HCT116 (cell line): ENCODE measurements at regions of chr3 and their contacts with region 1.

Region 1: GRCh38 chr3:127831723-127832172 is 9.4 kb upstream of the MGLL start:
- DNase-seq: no peak
- ATAC-seq: peak; percentile 79
- H3K4me3 ChIP-seq: no peak overlapping the region
- H3K27ac ChIP-seq: no peak overlapping the region
- H3K4me1 ChIP-seq: no peaks in the 10 kb centered on the region
- H3K27me3 ChIP-seq: no peaks in the 10 kb centered on the region
- CTCF ChIP-seq: peak; percentile 81 to 90 (median 81)
- POLR2A ChIP-seq: no peak
- RAD21 ChIP-seq: peak; percentile 93

Region 2: GRCh38 chr3:127652231-127652995 is 179.3 kb before region 1 on chr3:
- CTCF ChIA-PET with region 1: interaction called, 4 read pairs
- POLR2A ChIA-PET with region 1: no interaction called
- RAD21 ChIA-PET with region 1: no interaction called
- intact Hi-C with region 1: loop called (anchors 1 kb)
- DNase-seq: peak; percentile 41
- ATAC-seq: peak; percentile 94
- H3K4me3 ChIP-seq: no peak overlapping the region
- H3K27ac ChIP-seq: no peak overlapping the region
- H3K4me1 ChIP-seq: peaks cover 3 to 15% of the 10 kb centered on the region in 2 experiments
- H3K27me3 ChIP-seq: no peaks in the 10 kb centered on the region
- CTCF ChIP-seq: peak; percentile 82 to 94 (median 91)
- POLR2A ChIP-seq: no peak
- RAD21 ChIP-seq: peak; percentile 97

Region 3: DNA sequence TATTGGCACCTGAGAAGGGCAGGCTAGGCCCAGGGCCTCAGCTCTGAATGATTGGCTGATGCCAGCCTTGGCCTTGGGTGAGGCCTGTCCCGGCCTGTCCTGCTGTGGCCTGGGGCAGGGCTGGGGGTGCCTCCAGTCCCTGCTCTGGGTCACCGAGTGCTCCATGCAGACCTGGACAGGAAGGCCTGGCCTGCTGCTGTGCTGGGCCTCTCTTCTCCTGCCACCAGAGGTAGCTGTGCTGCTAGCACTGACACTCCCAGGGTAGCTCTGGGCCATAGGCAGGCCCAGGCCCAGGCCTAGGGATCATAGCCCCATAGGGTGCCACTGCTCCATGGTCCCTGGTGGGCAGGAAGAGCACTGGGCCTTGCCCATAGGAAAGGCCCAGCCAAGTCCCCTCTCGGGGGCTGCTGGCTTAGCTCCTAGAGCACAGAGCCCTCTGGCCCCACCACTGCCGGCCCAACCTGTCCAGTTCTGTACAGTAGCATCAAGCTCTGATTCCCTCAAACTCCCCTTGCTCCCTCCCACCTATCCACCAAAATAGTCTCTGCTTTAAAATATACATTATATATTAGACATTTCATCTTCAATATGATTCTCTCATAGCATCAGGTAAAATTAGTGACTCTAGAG is 140.8 kb before region 1 on chr3:
- CTCF ChIA-PET with region 1: interaction called, 7 read pairs
- POLR2A ChIA-PET with region 1: no interaction called
- RAD21 ChIA-PET with region 1: no interaction called
- intact Hi-C with region 1: loop called (anchors 2 kb)
- DNase-seq: peak; percentile 43
- ATAC-seq: peak; percentile 95
- H3K4me3 ChIP-seq: no peak overlapping the region
- H3K27ac ChIP-seq: peak overlapping the region; percentile 30
- H3K4me1 ChIP-seq: peaks cover 13 to 36% of the 10 kb centered on the region in 2 experiments
- H3K27me3 ChIP-seq: no peaks in the 10 kb centered on the region
- CTCF ChIP-seq: peak; percentile 70 to 84 (median 84)
- POLR2A ChIP-seq: no peak
- RAD21 ChIP-seq: peak; percentile 90

Region 4: GRCh38 chr3:127791211-127791946 is 40.4 kb before region 1 on chr3:
- CTCF ChIA-PET with region 1: interaction called, 3 read pairs
- POLR2A ChIA-PET with region 1: no interaction called
- RAD21 ChIA-PET with region 1: no interaction called
- intact Hi-C with region 1: loop called (anchors 1 kb)
- DNase-seq: no peak
- ATAC-seq: peak; percentile 85
- H3K4me3 ChIP-seq: no peak overlapping the region
- H3K27ac ChIP-seq: no peak overlapping the region; the same call in 1 of the 2 replicates
- H3K4me1 ChIP-seq: peaks cover 6 to 50% of the 10 kb centered on the region in 2 experiments; a peak in 3 of 4 replicates
- H3K27me3 ChIP-seq: no peaks in the 10 kb centered on the region
- CTCF ChIP-seq: peak; percentile 41 to 53 (median 51); a peak in 5 of 6 replicates
- POLR2A ChIP-seq: no peak
- RAD21 ChIP-seq: peak; percentile 71

Region 5: DNA sequence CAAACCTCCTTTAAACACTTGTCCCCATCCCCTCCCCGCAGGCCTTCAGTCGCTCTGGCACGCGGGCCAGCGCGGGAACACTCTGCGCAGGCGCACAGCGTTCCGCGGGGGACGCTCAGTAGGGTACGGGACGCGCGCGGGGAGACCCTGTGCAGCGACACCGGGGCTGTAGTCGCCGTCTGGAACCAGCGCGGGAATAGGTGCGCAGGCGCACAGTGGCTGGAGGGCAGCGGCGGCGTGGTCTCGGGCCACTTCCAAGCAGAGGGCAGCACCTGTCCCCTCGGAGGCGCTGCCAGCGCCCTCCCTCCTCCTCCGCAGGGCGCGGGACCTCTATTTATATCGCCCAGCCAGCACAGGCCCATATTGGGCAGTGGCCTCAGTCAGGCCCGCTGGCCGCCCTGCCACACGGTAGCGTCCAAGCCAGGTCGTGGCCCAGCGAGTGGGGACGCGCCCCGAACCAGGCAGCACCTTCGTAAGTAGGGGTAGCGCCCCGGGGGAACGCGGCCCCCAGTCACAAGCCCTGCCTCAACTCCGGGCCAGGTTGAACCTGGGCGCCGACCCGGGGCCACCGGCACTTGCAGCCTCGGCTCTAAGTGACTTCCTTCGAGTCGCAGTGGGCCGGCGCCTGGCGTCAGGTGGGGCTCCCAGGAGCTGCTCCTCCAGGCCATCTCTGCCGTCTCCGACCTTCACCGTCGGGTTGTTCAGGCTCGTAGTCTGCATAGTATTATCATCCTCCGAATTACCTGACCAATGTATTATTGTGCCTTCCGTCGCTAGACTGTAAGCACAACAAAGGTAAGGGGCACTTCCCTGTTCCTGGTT is 83.6 kb after region 1 on chr3 and contains the start of gene KBTBD12:
- CTCF ChIA-PET with region 1: no interaction called
- POLR2A ChIA-PET with region 1: no interaction called
- RAD21 ChIA-PET with region 1: no interaction called
- intact Hi-C with region 1: no loop called
- DNase-seq: no peak
- ATAC-seq: no peak
- H3K4me3 ChIP-seq: no peak within 1 kb of the TSS
- H3K27ac ChIP-seq: no peak within 1 kb of the TSS
- H3K4me1 ChIP-seq: no peaks in the 10 kb centered on the region
- H3K27me3 ChIP-seq: no peaks in the 10 kb centered on the region
- CTCF ChIP-seq: no peak
- POLR2A ChIP-seq: no peak
- RAD21 ChIP-seq: no peak
- total RNA-seq, gene KBTBD12: not detected

Region 6: DNA sequence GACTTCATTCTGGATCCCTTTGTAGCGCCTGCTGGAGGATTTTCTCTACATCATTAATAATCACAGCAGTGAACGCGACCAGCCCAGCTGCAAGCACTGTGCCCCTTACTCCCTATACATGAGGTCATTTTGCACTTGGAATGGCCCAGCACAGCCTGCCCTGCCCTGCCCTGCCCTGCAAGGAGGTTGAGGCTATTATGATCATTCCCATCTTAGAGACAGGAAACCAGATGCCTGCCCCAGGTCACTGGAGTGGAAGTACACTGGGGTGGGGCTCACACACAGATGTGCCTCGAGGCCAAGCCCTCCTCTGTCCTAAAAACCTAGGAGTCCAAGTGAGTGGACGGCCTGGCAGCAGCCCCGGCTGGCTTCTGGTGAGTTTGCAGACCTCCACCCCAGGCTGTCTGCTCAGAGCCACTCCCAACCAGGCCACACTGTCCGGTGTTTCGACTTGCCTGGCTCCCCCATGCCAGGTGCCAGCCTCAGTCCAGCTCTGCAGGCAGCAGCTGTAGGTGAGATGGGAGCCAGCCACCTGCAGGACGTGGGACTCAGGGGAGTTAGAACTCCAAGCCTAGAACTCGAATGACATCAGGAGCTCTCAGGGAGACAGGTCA is 190.1 kb after region 1 on chr3:
- CTCF ChIA-PET with region 1: no interaction called
- POLR2A ChIA-PET with region 1: no interaction called
- RAD21 ChIA-PET with region 1: no interaction called
- intact Hi-C with region 1: no loop called
- DNase-seq: no peak
- ATAC-seq: no peak
- H3K4me3 ChIP-seq: no peak overlapping the region
- H3K27ac ChIP-seq: no peak overlapping the region
- H3K4me1 ChIP-seq: no peaks in the 10 kb centered on the region
- H3K27me3 ChIP-seq: no peaks in the 10 kb centered on the region
- CTCF ChIP-seq: no peak
- POLR2A ChIP-seq: no peak
- RAD21 ChIP-seq: no peak